Panc1 (cell line): ENCODE measurements at regions of chr11 and their contacts with region 1.

Region 1: GRCh38 chr11:46198246-46199240 is 77.3 kb upstream of the PHF21A start:
- DNase-seq: no peak
- ATAC-seq: no peak
- H3K4me3 ChIP-seq: no peak overlapping the region
- H3K27ac ChIP-seq: no peak overlapping the region
- H3K4me1 ChIP-seq: no peaks in the 10 kb centered on the region
- H3K27me3 ChIP-seq: peaks cover 7% of the 10 kb centered on the region; the same call in 1 of the 2 replicates
- CTCF ChIP-seq: no peak

Region 2: GRCh38 chr11:45817191-45817590 is 381.4 kb before region 1 on chr11:
- CTCF ChIA-PET with region 1: no interaction called
- POLR2A ChIA-PET with region 1: interaction called, 12 read pairs
- in situ Hi-C with region 1: no loop called
- intact Hi-C with region 1: no loop called
- DNase-seq: no peak
- ATAC-seq: no peak
- H3K4me3 ChIP-seq: no peak overlapping the region
- H3K27ac ChIP-seq: no peak overlapping the region
- H3K4me1 ChIP-seq: no peaks in the 10 kb centered on the region
- H3K27me3 ChIP-seq: no peaks in the 10 kb centered on the region
- CTCF ChIP-seq: no peak

Region 3: GRCh38 chr11:46121724-46122477 is 76.6 kb before region 1 on chr11:
- CTCF ChIA-PET with region 1: no interaction called
- POLR2A ChIA-PET with region 1: no interaction called
- in situ Hi-C with region 1: no loop called
- intact Hi-C with region 1: no loop called
- DNase-seq: no peak
- ATAC-seq: peak; percentile 66
- H3K4me3 ChIP-seq: peak overlapping the region; percentile 77 to 82
- H3K27ac ChIP-seq: peak overlapping the region; percentile 95
- H3K4me1 ChIP-seq: peaks cover 22% of the 10 kb centered on the region
- H3K27me3 ChIP-seq: no peaks in the 10 kb centered on the region
- CTCF ChIP-seq: no peak